Right ventricle myocardium inferior (tissue), 1 donor: ENCODE measurements at regions of chr6 and their contacts with region 1.

Region 1: DNA sequence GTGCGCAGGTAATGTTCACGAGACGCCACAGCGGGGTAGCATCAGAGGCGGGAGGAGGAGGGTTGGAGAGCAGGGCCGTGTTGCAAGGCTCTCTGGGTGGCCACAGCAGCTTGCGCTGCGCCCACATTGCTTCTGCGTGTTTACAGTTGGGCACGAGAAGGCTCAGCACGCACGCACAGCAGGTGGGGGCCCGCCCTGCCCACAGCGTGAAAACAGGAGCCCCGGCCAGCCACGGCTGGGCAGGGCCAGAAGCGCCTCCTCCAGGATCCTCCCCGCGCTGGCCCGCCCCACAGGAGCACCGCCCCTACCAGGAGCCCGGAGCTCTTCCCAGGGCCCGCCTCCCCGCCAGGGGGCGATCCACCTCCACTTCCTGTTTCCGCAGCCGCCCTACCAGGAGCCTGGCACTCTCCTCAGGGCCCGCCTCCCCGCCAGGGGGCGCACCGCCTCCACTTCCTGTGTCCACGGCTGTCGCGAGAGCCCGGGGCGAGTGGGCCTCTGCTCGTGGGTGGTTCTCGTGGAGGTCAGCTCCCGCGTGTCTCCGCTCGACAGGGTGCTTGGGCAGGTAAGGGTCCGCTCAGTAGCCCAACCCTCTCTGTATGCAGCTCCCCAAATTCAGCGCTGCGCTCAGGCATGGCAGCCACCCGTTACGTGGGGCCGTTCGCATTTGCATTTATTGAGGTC is at the start of gene FAM50B:
- DNase-seq: peak; percentile 94
- ATAC-seq: peak; percentile 98
- total RNA-seq, gene FAM50B: 26.5 TPM

Region 2: GRCh38 chr6:3068329-3069214 is 780.5 kb before region 1 on chr6 and contains the start of gene RIPK1:
- intact Hi-C with region 1: no loop called
- DNase-seq: peak; percentile 97
- ATAC-seq: peak; percentile 92
- total RNA-seq, gene RIPK1: 6.9 TPM

Region 3: DNA sequence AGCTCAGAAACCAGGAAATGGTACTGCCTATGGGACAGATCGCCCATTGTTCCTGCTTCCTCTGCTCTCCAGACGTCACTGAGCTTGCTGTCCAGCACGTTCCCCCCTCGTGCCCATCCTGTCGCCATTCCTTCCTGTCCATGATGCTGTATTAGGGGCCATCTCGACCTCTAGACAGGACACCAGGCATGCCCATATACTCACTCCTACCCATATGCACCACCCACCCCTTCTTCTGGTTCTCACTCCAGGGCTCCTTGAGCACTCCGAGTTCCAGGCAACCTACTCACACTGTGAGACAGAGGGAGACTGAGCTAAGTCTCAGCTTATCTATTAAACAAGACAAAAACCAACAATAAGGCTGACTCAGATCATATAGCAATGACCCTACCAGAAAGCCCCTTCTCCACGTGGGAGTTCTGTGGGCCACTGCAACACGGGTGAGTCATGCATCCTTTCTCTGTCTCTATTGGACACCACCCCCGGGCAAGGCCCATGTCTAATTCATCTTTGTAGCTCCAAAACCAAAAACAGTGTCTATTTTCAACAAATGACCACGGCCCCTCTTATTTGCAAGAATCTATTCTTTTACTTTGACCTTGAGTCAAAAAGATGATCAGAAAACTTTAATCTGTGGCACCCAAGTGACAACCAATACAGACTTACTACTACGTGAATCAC is 524.7 kb before region 1 on chr6:
- intact Hi-C with region 1: no loop called
- DNase-seq: no peak
- ATAC-seq: no peak

Region 4: GRCh38 chr6:3929281-3929798 is 80.3 kb after region 1 on chr6:
- intact Hi-C with region 1: loop called (anchors 1 kb)
- DNase-seq: no peak
- ATAC-seq: no peak

Region 5: GRCh38 chr6:3990692-3991501 is 141.8 kb after region 1 on chr6:
- intact Hi-C with region 1: loop called (anchors 1 kb)
- DNase-seq: peak; percentile 88
- ATAC-seq: peak; percentile 93

Region 6: GRCh38 chr6:4370066-4370465 is 521.0 kb after region 1 on chr6:
- intact Hi-C with region 1: no loop called
- DNase-seq: no peak
- ATAC-seq: no peak